Posterior vena cava (tissue), 2 donors: ENCODE measurements at regions of chr15 and their contacts with region 1.

Region 1: DNA sequence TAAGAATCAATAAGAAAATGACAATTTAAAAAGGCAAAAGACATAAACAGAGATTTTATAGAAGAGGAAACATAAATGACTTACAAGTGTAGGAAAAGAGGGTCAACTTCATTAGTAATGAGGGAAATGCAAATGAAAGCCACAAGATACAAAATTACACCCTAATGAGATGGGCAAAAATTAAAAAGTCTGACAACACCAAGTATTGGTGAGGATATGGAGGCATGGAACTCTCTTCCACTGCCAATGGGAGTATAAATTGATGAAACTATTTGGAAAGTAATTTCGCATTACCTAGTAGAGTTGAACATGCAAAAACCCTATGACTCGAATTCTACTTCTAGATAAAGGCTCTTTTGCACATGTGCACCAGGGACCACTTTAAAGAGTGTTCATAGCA is 28.2 kb upstream of the ITGA11 start:
- DNase-seq: no peak

Region 2: GRCh38 chr15:68447209-68447608 is 13.0 kb before region 1 on chr15:
- intact Hi-C with region 1: loop called in 1 of 2 experiments (anchors 1 kb)
- DNase-seq: no peak